Naive thymus-derived CD8-positive, alpha-beta T cell (primary cell): ENCODE measurements at regions of chr1 and their contacts with region 1.

Region 1: GRCh38 chr1:12511516-12512468 is 106.2 kb downstream of the DHRS3 start:
- DNase-seq: no peak
- ATAC-seq: no peak
- H3K4me3 Mint-ChIP-seq: peak overlapping the region; percentile 52 to 92 (median 78)
- H3K27ac Mint-ChIP-seq: peak overlapping the region; percentile 97 to 99 (median 98)
- H3K4me1 Mint-ChIP-seq: peaks cover 22 to 52% (median 43%) of the 10 kb centered on the region in 4 donors
- H3K27me3 Mint-ChIP-seq: no peaks in the 10 kb centered on the region

Region 2: DNA sequence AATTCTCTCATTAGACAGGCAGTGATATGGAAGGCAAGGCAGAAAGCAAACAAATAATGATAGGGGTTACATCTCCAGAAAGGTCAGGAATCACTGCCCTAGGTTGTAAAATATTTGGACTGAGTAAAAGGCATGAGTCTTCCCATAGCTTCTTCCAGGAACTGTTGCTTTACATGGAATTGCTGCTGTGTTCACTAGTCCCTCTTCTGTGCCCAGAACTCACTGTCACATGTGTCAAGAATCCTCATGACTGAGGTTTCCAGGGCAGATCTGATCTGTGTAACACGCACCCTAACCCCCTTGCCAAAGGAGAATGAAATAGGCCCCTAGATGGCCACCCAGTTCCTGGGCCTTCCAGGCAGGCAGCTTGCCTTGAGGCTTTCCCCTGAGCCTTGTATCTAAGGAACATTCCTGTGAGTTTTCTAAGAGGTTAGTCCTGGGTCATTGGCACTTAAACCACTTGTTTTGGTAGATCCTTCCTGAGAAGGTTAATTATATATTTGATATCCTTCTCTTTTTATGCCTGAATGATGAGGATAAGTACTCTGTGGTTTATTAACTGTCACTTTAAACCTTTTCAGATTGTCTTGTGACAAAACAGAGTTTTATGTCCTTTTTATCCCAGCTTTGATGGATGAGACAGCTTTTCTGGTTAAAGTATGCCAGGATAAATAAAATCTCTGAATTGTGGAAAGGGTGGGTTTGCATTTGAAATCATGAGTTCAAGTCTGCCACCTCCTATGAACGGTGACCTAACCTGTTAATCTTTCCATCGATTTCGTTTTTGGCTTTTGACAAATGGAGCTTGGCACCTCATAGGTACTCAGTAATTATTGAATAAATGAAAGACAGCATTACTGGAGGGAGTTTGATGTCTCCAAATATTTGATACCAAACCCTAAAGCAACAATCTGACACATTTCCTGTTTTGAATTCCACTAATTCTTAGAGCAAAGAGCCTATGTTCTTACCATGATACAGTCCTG is 57.1 kb before region 1 on chr1:
- POLR2A ChIA-PET with region 1: interaction called, 11 read pairs
- DNase-seq: no peak
- ATAC-seq: no peak
- H3K4me3 Mint-ChIP-seq: peak overlapping the region in 8 of 10 donors; percentile 24 to 71 (median 53)
- H3K27ac Mint-ChIP-seq: peak overlapping the region; percentile 65 to 100 (median 90)
- H3K4me1 Mint-ChIP-seq: peaks cover 30 to 90% (median 90%) of the 10 kb centered on the region in 4 donors
- H3K27me3 Mint-ChIP-seq: no peaks in the 10 kb centered on the region

Region 3: DNA sequence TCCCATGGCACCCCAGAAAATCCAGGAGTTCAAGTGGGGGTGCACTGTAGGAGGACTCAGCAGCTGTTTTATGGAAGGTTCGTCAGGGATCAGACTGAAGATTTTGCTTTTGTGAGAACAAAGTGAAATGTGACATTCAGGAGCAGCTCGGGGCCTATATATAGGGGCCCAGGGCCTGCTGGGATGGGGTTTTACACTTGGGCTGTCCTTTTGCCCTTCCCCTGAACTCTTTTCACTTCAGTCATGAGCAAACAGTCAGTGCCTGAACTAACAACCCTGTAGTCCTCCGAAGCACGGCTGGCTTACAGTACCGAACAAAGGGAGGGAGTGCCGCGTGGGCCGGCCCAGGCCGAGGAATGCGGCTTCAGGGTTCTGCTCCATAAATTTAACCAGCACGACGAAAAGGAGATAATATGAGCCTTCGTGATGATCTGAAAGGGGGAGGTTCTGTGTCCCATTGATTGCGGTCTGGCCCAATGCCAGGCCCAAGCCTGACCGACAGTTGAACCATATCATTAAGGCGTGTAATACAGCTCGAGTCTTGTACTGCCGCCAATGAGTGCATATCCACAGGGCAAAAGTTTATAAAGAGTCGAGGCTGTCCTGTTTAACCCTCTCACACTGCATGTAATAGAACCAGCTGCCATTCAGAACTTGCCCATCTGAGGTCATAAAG is 33.7 kb before region 1 on chr1:
- POLR2A ChIA-PET with region 1: interaction called, 39 read pairs
- DNase-seq: peak in 6 of 10 donors; percentile 10 to 66 (median 25)
- ATAC-seq: peak; percentile 27 to 36
- H3K4me3 Mint-ChIP-seq: peak overlapping the region; percentile 60 to 85 (median 80)
- H3K27ac Mint-ChIP-seq: peak overlapping the region; percentile 92 to 97 (median 95)
- H3K4me1 Mint-ChIP-seq: peaks cover 43 to 95% (median 93%) of the 10 kb centered on the region in 4 donors
- H3K27me3 Mint-ChIP-seq: no peaks in the 10 kb centered on the region

Region 4: DNA sequence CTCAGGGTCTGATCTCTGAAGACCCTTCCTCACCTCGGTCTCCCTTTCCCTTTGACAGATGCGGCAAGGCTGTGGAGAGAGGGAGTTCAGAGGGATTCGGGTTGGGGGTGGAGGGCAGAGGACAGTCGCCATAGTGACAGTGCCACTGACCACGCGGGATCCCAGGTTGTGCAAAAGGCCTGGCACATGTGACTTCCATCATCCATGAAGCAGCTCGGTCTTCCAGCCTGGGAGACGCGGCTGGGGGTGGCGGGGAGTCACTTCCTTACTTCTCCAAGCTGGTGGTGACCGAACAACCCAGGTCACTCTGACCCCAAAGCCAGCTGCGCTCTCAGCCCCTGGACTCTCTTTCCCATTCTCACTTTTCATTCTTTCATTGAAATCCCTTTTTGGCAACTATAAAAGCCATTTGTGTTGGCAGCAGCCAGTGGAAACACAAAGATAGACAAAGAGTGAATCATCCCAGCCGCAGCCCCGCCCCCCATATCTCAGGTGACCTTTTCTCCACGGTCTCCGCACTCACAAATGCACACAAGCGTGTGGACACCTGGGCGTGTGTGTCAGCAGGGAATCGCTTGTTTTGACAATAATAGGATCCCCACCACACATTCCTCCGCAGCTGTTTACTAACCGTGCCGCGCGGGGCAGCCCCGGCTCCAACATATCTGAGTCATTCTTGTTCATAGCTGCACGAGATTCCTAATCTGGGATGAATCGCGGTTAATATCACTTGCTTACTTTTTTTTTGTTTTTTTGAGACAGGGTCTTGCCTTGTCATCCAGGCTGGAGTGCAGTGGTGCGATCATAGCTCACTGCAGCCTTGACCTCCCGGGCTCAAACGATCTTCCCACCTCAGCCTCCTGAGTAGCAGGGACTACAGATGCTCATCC is 37.9 kb after region 1 on chr1:
- POLR2A ChIA-PET with region 1: no interaction called
- DNase-seq: no peak
- ATAC-seq: no peak
- H3K4me3 Mint-ChIP-seq: no peak overlapping the region
- H3K27ac Mint-ChIP-seq: peak overlapping the region in 3 of 10 donors; percentile 16 to 52 (median 17)
- H3K4me1 Mint-ChIP-seq: peaks cover 0 to 4% (median 2%) of the 10 kb centered on the region in 4 donors
- H3K27me3 Mint-ChIP-seq: peaks cover 0 to 2% (median 0%) of the 10 kb centered on the region in 5 donors

Region 5: DNA sequence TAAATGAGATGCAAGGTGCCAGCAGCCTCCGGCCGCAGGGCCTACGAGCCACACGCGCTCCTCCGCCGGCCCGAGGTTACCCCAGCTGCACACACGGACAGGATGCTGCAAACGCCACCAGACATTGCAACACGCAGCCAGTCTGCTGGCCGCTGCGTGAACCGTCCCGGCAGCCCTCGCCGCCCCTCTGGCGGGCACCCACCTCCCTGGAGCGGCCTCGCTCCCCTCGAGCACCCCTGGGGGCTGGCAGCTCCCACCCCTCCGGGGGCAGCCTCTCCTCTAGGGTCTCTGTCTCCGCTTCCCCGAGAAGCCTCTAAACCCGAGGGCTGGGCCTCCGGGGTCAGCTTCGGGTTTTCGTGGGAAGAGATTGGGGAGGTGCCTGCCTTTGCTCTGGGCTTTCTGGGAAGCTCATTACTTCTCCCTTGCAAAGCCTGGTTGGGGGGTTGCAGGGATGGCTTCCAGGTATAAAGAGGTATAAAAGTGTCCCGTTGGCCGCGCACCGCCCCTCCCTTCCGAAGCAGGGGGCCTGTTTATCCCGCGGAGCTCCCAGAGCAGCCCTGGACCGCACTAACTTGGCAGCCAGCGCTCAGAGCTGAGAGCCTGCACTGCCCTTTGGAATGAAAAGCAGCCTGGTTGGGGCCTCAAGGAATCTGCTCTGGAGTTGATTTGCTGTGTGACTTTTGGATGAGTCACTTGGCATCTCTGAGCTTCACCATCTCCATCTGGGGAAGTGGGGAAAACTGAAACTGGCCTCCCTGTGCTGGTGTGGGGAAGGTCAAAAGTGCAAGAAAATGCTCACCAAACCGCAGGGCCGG is 84.4 kb after region 1 on chr1:
- POLR2A ChIA-PET with region 1: interaction called, 12 read pairs
- DNase-seq: peak in 2 of 10 donors; percentile 10 to 27
- ATAC-seq: peak; percentile 24 to 41
- H3K4me3 Mint-ChIP-seq: peak overlapping the region; percentile 18 to 86 (median 61)
- H3K27ac Mint-ChIP-seq: peak overlapping the region in 9 of 10 donors; percentile 4 to 86 (median 34)
- H3K4me1 Mint-ChIP-seq: peaks cover 31 to 74% (median 68%) of the 10 kb centered on the region in 4 donors
- H3K27me3 Mint-ChIP-seq: no peaks in the 10 kb centered on the region